Transverse colon (tissue), 4 donors: ENCODE measurements at regions of chr7 and their contacts with region 1.

Region 1: GRCh38 chr7:100705753-100706671 is at the start of gene POP7:
- DNase-seq: peak; percentile 99
- H3K4me3 ChIP-seq: peak within 1 kb of the TSS; percentile 82 to 92 (median 82)
- H3K27ac ChIP-seq: peak within 1 kb of the TSS; percentile 93 to 96 (median 94)
- H3K4me1 ChIP-seq: peaks cover 7 to 21% (median 12%) of the 10 kb centered on the region in 4 donors
- H3K27me3 ChIP-seq: peaks cover 2% of the 10 kb centered on the region
- CTCF ChIP-seq: no peak
- EP300 ChIP-seq: no peak
- POLR2A ChIP-seq: peak; percentile 77
- total RNA-seq, gene POP7: 10.7 to 58.7 (median 34.1) TPM

Region 2: DNA sequence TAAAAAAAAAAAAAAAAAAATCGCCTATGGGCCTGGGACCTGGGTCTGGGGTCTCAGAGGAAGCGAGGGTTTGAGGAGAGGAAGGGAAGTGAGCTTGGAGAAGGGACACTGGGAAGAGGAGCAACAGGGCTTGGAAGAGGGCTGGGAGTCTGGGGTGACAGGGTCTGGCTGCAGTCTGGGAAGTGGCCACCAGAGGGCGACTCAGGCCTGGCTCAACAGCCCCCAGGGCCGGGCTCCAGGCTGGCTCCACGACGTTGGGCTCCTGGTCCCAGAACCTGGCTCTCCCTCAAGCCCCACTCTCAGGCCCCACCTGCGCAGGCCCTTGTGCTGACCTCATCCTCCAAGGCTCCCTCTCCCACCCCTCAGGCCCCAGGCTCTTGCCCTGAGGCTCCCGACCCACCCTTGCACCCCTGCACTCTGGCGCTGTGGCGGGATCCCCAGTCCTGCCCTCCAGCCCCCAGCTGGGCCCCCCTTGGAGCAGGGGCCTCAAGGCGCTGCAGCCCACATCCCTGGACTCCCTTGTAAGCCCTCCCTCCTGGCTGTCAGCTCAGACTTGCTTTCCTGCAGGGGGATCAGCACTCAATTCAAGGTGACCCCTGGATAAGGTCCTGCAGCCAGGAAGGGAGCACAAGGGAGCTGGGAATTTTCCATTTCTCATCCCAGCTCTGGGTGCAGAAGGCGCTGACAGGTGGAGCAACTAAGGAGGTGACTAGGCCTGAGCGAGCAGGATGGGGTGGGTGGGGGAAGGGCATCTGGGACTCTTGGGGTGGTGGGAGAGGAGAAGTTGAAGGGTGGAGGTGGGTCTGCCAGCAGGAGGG is 236.6 kb before region 1 on chr7:
- in situ Hi-C with region 1: loop called in 1 of 4 experiments (anchors 25 kb)
- intact Hi-C with region 1: loop called (anchors 10 kb)
- DNase-seq: peak; percentile 91
- H3K4me3 ChIP-seq: no peak overlapping the region
- H3K27ac ChIP-seq: peak overlapping the region in 3 of 4 donors; percentile 34 to 62 (median 49)
- H3K4me1 ChIP-seq: peaks cover 19 to 49% (median 28%) of the 10 kb centered on the region in 4 donors
- H3K27me3 ChIP-seq: no peaks in the 10 kb centered on the region
- CTCF ChIP-seq: peak; percentile 94 to 98 (median 95)
- EP300 ChIP-seq: no peak
- POLR2A ChIP-seq: no peak

Region 3: DNA sequence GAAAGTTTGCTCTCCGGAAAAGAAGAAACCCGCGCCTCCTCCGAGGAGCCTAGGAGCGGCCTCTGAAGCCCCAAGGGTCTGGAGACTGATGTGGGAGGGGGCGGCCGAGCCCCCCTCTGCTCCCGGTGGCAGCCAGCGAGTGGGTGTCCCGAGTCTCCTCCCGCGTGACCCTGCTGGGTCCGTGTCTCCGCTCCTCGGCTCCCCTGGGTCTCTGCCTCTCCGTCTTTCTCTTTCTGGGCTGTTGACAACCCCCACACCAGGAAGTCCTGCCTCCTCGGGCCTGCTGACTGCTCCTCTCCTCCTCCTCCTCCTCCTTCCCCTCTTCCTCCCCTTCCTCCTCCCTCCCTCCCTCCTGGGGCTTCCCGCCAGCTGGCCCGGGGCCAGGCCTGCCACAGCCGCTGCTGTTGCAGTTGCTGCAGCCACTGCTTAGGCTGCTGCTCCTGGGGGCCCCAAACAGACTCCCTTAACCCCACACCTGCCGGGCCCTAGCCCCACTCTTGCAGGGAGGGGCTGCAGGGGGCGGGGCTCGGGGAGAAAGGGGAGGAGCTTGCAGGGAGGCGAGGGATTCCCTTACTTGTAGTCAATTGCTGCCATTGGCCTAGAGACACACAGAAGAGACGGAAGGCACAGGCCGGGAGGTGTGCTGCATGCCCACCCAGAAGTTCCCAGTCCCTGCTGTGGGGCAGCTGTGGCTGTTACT is 226.9 kb before region 1 on chr7 and contains the start of gene TSC22D4:
- in situ Hi-C with region 1: loop called in 1 of 4 experiments (anchors 25 kb)
- intact Hi-C with region 1: loop called (anchors 10 kb)
- DNase-seq: peak; percentile 96
- H3K4me3 ChIP-seq: peak within 1 kb of the TSS; percentile 97 to 99 (median 98)
- H3K27ac ChIP-seq: peak within 1 kb of the TSS; percentile 97 to 98 (median 98)
- H3K4me1 ChIP-seq: peaks cover 36 to 57% (median 45%) of the 10 kb centered on the region in 4 donors
- H3K27me3 ChIP-seq: no peaks in the 10 kb centered on the region
- CTCF ChIP-seq: no peak
- EP300 ChIP-seq: no peak
- POLR2A ChIP-seq: peak; percentile 94
- total RNA-seq, gene TSC22D4: 41.6 to 101 (median 67.6) TPM

Region 4: DNA sequence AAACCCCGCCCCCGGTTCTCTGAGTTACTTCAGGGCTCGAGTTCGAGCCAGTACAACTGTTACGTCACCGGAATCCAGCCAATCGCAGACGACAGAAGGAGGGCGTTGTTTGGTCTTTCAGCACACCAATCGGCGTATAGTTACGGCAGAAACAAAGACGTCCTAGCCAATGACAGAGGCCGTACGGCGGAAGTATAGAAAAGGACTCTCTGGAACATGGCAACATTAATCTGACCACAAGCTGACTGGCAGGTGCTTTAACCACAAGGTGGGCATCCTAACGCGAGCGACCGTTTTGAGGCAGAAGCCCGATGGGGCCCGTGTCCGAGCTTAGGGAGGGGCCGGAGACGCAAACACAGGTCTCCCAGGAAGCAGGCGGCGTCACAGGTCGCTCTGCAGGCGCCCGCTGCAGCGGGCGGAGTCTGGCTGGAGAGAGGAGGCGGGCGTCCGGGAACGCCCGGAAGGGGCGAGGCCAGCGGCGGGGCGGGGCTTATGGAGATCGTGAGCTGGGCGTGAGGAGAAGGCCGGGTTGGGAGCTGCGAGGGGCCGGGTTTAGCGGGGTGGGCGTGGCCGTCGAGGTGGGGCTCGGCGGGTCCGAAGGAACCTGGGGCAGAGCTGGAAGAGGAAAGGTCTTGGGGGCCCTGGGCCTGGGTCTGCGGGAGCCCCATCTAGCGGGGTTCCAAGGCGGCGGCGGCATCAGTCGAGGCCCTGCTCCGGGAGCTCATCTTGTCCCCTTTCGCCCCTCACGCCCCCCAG is 93.9 kb before region 1 on chr7 and contains the start of gene MOSPD3:
- in situ Hi-C with region 1: no loop called
- intact Hi-C with region 1: no loop called
- DNase-seq: peak; percentile 99
- H3K4me3 ChIP-seq: peak within 1 kb of the TSS; percentile 51 to 89 (median 70)
- H3K27ac ChIP-seq: peak within 1 kb of the TSS; percentile 89 to 99 (median 92)
- H3K4me1 ChIP-seq: peaks cover 4 to 20% (median 8%) of the 10 kb centered on the region in 4 donors
- H3K27me3 ChIP-seq: no peaks in the 10 kb centered on the region
- CTCF ChIP-seq: peak in 2 of 5 experiments; percentile 44 to 46
- EP300 ChIP-seq: peak; percentile 15
- POLR2A ChIP-seq: peak; percentile 98
- total RNA-seq, gene MOSPD3: 13.5 to 39.6 (median 18.4) TPM

Region 5: GRCh38 chr7:100852048-100852872 is 146.2 kb after region 1 on chr7 and contains the start of gene SLC12A9:
- in situ Hi-C with region 1: loop called in 2 of 4 experiments (anchors 5 to 25 kb)
- intact Hi-C with region 1: loop called (anchors 10 kb)
- DNase-seq: peak; percentile 93
- H3K4me3 ChIP-seq: peak within 1 kb of the TSS; percentile 49 to 83 (median 68)
- H3K27ac ChIP-seq: peak within 1 kb of the TSS; percentile 76 to 85 (median 80)
- H3K4me1 ChIP-seq: peaks cover 0 to 20% (median 14%) of the 10 kb centered on the region in 4 donors
- H3K27me3 ChIP-seq: no peaks in the 10 kb centered on the region
- CTCF ChIP-seq: peak; percentile 93 to 96 (median 94)
- EP300 ChIP-seq: no peak
- POLR2A ChIP-seq: peak; percentile 53
- total RNA-seq, gene SLC12A9: 21.0 to 46.2 (median 23.1) TPM

Region 6: DNA sequence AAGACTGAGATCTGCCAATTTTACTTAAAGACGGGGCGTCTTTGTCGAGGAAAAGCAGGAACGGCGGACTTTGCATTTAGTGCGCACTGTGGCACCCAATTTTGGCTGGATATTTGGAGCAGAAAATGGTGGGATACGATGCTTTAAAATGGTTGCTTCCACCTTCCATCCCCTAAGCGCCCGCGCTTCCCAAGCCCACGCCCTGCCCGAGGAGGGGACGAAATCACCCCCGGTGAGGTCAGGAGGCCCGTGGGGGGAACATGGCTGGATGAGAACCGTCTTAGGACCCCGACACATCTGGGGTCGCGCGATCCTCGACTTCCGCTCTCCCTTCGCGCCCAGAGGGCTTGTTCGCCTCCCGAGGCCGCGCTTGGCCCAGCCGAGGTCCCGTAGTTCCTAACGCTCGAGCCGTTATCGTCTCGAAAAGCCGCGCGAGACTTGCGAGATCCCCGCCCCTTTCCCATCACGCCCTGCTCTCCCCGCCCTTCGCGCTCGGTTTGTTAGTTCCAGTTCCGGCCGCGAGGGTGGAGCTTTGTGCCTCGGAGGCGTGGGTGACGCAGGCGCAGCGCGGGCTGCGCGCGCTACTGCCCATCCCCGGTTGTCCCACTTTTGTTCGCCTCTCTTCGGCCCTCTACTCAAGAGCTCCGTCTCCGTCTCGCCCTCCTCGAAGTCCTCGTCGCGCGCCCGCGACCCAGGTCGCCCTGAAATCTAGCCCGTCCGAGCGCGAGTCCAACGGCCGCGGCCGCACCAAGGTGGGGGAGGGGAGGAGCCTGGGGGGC is 168.8 kb after region 1 on chr7 and contains the start of gene SRRT:
- in situ Hi-C with region 1: loop called in 1 of 4 experiments (anchors 25 kb)
- intact Hi-C with region 1: no loop called
- DNase-seq: peak; percentile 99
- H3K4me3 ChIP-seq: peak within 1 kb of the TSS; percentile 79 to 91 (median 87)
- H3K27ac ChIP-seq: peak within 1 kb of the TSS; percentile 93 to 96 (median 95)
- H3K4me1 ChIP-seq: peaks cover 11 to 48% (median 24%) of the 10 kb centered on the region in 4 donors
- H3K27me3 ChIP-seq: no peaks in the 10 kb centered on the region
- CTCF ChIP-seq: peak; percentile 55 to 93 (median 57)
- EP300 ChIP-seq: no peak
- POLR2A ChIP-seq: peak; percentile 98
- total RNA-seq, gene SRRT: 64.6 to 217 (median 103) TPM

Region 7: DNA sequence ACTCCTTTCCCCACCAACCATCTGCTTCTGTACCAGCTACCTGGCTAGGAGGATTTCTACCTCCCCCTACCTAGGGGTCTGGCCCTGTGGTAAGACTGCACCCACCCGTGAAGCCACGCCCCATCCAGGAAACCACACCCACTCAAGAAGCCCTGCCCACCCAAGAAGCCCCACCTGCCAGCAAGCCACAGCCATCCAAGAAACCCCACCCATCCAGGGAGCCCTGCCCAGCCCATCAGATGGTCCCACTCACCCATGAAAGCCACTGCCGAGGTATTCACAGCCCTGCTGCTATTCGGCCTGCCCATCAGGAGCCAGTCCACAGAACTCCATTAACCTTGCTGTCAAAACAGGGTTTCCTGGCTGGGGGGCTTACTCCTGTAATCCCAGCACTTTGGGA is 227.7 kb after region 1 on chr7:
- in situ Hi-C with region 1: no loop called
- intact Hi-C with region 1: no loop called
- DNase-seq: no peak
- H3K4me3 ChIP-seq: no peak overlapping the region
- H3K27ac ChIP-seq: no peak overlapping the region
- H3K4me1 ChIP-seq: no peaks in the 10 kb centered on the region
- H3K27me3 ChIP-seq: peaks cover 32% of the 10 kb centered on the region
- CTCF ChIP-seq: no peak
- EP300 ChIP-seq: no peak
- POLR2A ChIP-seq: no peak